ENCODE measurements at regions of chr1 and their contacts with region 1.

Region 1: DNA sequence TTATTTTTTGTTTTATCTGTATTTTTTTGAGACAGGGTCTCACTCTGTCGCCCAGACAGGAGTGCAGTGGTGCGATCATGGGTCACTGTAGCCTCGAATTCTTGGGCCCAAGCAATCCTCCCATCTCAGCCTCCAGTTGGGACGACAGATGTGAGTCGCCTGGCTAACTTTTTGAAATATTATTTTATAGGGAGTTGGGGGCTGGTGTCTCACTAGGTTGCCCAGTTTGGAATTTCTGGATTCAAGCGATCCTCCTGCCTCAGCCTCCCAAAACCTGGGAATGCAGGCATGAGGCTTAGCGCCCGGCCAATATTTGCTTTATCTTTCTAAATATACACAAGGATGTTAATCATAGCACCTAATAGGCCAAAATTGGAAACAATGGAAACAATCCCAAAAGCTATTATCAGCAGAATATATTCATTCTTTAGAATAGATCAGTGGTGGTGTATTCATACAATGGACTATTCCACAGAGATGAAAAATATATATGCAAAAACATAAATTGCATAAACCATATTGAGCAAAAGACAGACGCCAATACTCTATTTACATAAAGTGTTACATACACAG is 55.9 kb downstream of the DAP3 start:
- DNase-seq: no peak
- H3K4me3 Mint-ChIP-seq: peak overlapping the region; percentile 99
- H3K27ac Mint-ChIP-seq: peak overlapping the region; percentile 95
- H3K4me1 Mint-ChIP-seq: peaks cover 12% of the 10 kb centered on the region
- H3K27me3 Mint-ChIP-seq: no peaks in the 10 kb centered on the region

Region 2: GRCh38 chr1:155472491-155473083 is 272.2 kb before region 1 on chr1:
- intact Hi-C with region 1: no loop called
- DNase-seq: no peak
- H3K4me3 Mint-ChIP-seq: no peak overlapping the region
- H3K27ac Mint-ChIP-seq: no peak overlapping the region
- H3K4me1 Mint-ChIP-seq: peaks cover 26% of the 10 kb centered on the region
- H3K27me3 Mint-ChIP-seq: no peaks in the 10 kb centered on the region

Region 3: DNA sequence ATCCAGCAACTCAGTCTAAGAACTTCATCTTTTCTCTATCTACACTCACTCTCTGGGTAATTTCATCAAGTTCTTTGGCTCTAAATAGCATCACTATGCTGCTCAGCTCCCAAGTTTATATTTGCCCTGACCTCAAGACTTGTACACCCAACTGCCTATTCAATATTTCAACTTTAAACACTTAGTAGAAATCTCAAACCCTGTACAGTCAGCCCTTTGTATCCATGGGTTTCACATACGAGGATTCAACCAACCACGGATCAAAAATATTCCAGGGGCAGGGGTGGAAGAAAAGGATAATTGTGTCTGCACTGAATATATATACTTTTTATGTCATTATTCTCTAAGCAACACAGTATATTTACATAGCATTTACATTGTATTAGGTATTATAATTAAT is 196.1 kb before region 1 on chr1:
- intact Hi-C with region 1: no loop called
- DNase-seq: no peak
- H3K4me3 Mint-ChIP-seq: no peak overlapping the region
- H3K27ac Mint-ChIP-seq: no peak overlapping the region
- H3K4me1 Mint-ChIP-seq: peaks cover 17% of the 10 kb centered on the region
- H3K27me3 Mint-ChIP-seq: no peaks in the 10 kb centered on the region

Region 4: GRCh38 chr1:155688324-155689080 is 56.3 kb before region 1 on chr1 and contains the start of gene YY1AP1:
- intact Hi-C with region 1: loop called (anchors 2 kb)
- DNase-seq: peak; percentile 88
- H3K4me3 Mint-ChIP-seq: peak within 1 kb of the TSS; percentile 95
- H3K27ac Mint-ChIP-seq: peak within 1 kb of the TSS; percentile 96
- H3K4me1 Mint-ChIP-seq: peaks cover 62% of the 10 kb centered on the region
- H3K27me3 Mint-ChIP-seq: peaks cover 3% of the 10 kb centered on the region
- total RNA-seq, gene YY1AP1: 62.2 and 64.4 TPM in 2 replicates

Region 5: GRCh38 chr1:155911156-155912055 is 166.6 kb after region 1 on chr1 and contains the start of gene RIT1:
- intact Hi-C with region 1: loop called (anchors 10 kb)
- DNase-seq: peak; percentile 81
- H3K4me3 Mint-ChIP-seq: peak within 1 kb of the TSS; percentile 98
- H3K27ac Mint-ChIP-seq: peak within 1 kb of the TSS; percentile 97
- H3K4me1 Mint-ChIP-seq: peaks cover 23% of the 10 kb centered on the region
- H3K27me3 Mint-ChIP-seq: peaks cover 2% of the 10 kb centered on the region
- total RNA-seq, gene RIT1: 20.2 and 22.3 TPM in 2 replicates

Measured in activated T-helper 1 cell treated with anti-CD3 and anti-CD28 coated beads, Interleukin-12 subunit alpha, Interleukin-12 subunit beta, Interleukin-2, Interleukin-4 antibody, amounts not matched to agents 30 ng/mL and 10 ng/mL and 1 ng/mL, durations not matched to agents 14 hours and 24 hours and 36 hours (primary cell).